Activated CD4-positive, alpha-beta memory T cell treated with anti-CD3 and anti-CD28 coated beads for 36 hours (primary cell): ENCODE measurements at regions of chr3 and their contacts with region 1.

Region 1: GRCh38 chr3:122497425-122497824 is 17.3 kb downstream of the KPNA1 start:
- DNase-seq: peak; percentile 55
- H3K4me3 Mint-ChIP-seq: no peak overlapping the region
- H3K27ac Mint-ChIP-seq: no peak overlapping the region
- H3K4me1 Mint-ChIP-seq: peaks cover 35% of the 10 kb centered on the region
- H3K27me3 Mint-ChIP-seq: no peaks in the 10 kb centered on the region

Region 2: GRCh38 chr3:122322095-122323075 is 175.0 kb before region 1 on chr3:
- CTCF ChIA-PET with region 1: no interaction called
- POLR2A ChIA-PET with region 1: no interaction called
- intact Hi-C with region 1: no loop called
- DNase-seq: peak; percentile 62
- H3K4me3 Mint-ChIP-seq: no peak overlapping the region
- H3K27ac Mint-ChIP-seq: peak overlapping the region; percentile 56
- H3K4me1 Mint-ChIP-seq: peaks cover 20% of the 10 kb centered on the region
- H3K27me3 Mint-ChIP-seq: peaks cover 4% of the 10 kb centered on the region

Region 3: GRCh38 chr3:122427857-122428471 is 69.5 kb before region 1 on chr3:
- CTCF ChIA-PET with region 1: no interaction called
- POLR2A ChIA-PET with region 1: no interaction called
- intact Hi-C with region 1: loop called (anchors 2 kb)
- DNase-seq: no peak
- H3K4me3 Mint-ChIP-seq: no peak overlapping the region
- H3K27ac Mint-ChIP-seq: peak overlapping the region; percentile 74
- H3K4me1 Mint-ChIP-seq: peaks cover 23% of the 10 kb centered on the region
- H3K27me3 Mint-ChIP-seq: no peaks in the 10 kb centered on the region

Region 4: DNA sequence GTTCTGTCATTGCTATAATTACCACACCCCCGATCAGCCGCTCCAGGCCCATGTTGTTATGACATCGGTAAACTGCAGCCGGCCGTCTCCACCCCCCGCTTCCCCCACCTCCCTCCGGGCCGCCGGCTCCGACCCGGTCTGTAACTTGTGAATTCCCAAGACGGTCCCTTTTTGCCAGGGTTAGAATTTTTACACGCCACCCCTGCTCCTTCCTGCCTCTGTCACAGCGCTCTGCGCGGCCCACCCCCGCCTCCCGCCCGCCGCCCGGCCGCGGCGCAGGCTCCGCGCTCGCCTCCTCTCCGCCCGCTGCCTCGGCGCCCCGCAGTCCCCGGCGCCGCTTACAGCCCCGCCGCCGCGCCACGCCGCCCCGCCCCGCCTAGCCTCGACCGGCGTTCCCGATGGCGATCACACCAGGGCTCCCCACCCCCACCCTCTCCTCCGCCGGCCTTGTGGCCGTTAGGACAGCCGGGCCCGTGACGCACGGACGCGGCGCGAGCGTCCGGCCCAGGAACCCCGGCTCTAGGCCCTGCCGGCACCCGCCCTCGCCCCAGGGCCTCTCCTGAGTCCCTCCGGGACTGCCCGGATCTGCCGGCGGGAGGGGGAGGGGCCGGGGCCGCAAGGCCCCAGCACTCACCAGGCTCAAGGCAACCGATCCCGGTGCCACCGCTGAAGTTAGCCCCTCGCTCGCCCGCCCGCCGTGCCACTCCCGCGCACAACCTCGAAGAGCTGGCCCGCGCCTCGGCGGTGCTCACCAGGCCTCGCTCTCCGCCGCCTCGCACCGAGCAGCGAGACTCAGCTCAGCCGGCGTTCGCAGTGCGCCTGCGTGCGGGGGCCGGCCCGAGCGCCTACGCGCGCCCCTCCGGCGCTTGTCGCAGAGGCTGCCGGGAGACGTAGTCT is 16.9 kb after region 1 on chr3 and contains the start of gene KPNA1:
- CTCF ChIA-PET with region 1: no interaction called
- POLR2A ChIA-PET with region 1: interaction called, 4 read pairs
- intact Hi-C with region 1: loop called (anchors 1 kb)
- DNase-seq: peak; percentile 91
- H3K4me3 Mint-ChIP-seq: peak within 1 kb of the TSS; percentile 77
- H3K27ac Mint-ChIP-seq: peak within 1 kb of the TSS; percentile 85
- H3K4me1 Mint-ChIP-seq: peaks cover 39% of the 10 kb centered on the region
- H3K27me3 Mint-ChIP-seq: no peaks in the 10 kb centered on the region
- total RNA-seq, gene KPNA1: 43.4 to 46.0 TPM

Region 5: GRCh38 chr3:123105201-123106189 is 608.1 kb after region 1 on chr3:
- CTCF ChIA-PET with region 1: no interaction called
- POLR2A ChIA-PET with region 1: no interaction called
- intact Hi-C with region 1: loop called (anchors 5 kb)
- DNase-seq: no peak
- H3K4me3 Mint-ChIP-seq: no peak overlapping the region
- H3K27ac Mint-ChIP-seq: no peak overlapping the region
- H3K4me1 Mint-ChIP-seq: no peaks in the 10 kb centered on the region
- H3K27me3 Mint-ChIP-seq: no peaks in the 10 kb centered on the region